Caco-2 (cell line): ENCODE measurements at regions of chr1 and their contacts with region 1.

Region 1: DNA sequence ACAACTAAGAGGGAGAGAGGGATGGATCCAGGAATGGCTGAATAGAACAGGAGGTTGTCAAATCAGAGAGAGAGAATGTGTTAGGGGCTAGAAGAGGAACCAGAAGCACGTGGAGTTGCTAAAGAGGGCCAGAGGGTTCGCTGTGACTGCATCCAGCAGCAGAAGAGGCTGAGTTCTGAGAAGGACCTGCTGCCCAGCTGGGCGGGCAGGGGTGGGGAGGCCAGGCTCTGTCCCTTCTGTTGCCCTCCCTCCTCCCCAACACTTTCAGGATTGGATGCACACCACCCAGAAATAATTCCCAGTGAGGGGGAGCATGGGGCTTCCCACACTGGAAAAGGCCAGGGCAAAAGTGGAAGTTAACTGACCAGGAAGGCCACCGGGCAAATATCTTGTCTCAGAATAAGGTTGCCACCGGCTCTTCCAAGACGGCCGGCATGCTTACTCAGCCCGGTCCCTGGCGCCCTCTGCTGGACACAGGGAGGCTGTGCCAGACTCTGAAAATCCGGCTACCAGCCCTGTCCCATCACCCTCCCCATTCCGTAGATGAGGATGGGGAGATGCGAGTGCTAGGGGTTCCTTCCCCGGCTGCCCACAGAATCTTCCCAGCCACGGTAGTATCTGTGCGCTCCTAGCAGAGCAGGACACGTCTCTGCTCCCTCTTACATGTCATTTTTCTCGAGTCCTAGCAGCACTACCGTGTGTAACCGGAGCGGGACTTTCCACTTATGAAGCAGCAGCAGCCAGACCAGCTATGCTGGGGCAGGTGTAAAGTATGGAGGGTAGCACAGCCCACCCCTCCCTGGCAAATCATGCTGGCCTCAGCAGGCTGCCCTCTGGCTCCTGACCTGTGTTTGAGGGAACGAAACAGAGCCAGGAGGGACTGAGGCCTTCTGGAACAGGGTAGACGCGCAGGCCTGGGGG is 46.8 kb upstream of the A3GALT2 start:
- DNase-seq: peak; percentile 75 to 81
- H3K4me3 ChIP-seq: no peak overlapping the region
- H3K4me3 Mint-ChIP-seq: no peak overlapping the region
- H3K27ac Mint-ChIP-seq: no peak overlapping the region
- H3K4me1 ChIP-seq: peaks cover 18% of the 10 kb centered on the region; the same call in 1 of the 2 replicates
- H3K4me1 Mint-ChIP-seq: peaks cover 8% of the 10 kb centered on the region
- H3K27me3 ChIP-seq: no peaks in the 10 kb centered on the region
- H3K27me3 Mint-ChIP-seq: no peaks in the 10 kb centered on the region
- CTCF ChIP-seq: peak; percentile 67 to 84

Region 2: GRCh38 chr1:33127001-33127791 is 240.5 kb before region 1 on chr1:
- CTCF ChIA-PET with region 1: no interaction called
- POLR2A ChIA-PET with region 1: no interaction called
- intact Hi-C with region 1: loop called (anchors 10 kb)
- DNase-seq: peak; percentile 94 to 97
- H3K4me3 ChIP-seq: peak overlapping the region; percentile 77
- H3K4me3 Mint-ChIP-seq: peak overlapping the region; percentile 80
- H3K27ac Mint-ChIP-seq: peak overlapping the region; percentile 90
- H3K4me1 ChIP-seq: no peaks in the 10 kb centered on the region
- H3K4me1 Mint-ChIP-seq: peaks cover 6% of the 10 kb centered on the region
- H3K27me3 ChIP-seq: no peaks in the 10 kb centered on the region
- H3K27me3 Mint-ChIP-seq: no peaks in the 10 kb centered on the region
- CTCF ChIP-seq: peak; percentile 56 to 80

Region 3: DNA sequence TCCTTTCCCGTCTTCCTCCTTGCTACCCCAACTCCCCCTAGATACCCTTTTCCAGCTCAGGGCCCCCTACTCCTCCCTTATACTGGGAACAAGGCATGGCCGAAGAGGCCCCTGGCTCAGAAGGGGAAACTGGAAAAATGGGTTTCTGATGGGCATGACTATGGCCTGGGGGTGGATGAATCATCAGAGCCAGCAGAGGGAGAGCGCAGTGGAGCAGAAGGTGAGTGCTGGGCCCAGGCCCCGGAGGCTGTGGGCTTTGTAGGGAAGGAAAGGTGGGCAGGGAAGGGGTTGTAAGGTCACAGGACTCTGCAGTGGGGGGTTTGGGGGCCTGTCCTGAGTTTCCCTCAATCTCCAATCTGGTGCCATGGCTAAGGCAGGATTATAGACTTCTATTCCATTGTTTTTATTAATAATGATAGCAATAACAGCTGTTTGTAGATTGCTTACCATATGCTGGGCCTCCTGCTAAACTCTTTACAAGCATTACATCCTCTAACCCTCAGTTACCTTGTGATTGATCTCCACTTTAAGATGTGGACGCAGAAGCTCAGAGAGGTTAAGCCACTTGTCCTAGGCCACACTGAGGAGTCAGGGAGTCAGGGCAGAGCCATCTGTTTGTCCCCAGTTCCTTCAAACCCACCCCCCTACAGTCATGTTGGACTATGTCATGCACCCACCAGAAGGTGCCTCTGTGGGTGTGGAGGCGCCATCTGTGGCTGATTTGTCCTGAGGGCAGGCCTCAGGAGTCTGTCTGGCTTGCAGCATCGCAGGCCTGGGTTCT is 147.7 kb before region 1 on chr1:
- CTCF ChIA-PET with region 1: no interaction called
- POLR2A ChIA-PET with region 1: no interaction called
- intact Hi-C with region 1: loop called (anchors 1 kb)
- DNase-seq: peak; percentile 62 to 77
- H3K4me3 ChIP-seq: no peak overlapping the region
- H3K4me3 Mint-ChIP-seq: peak overlapping the region; percentile 34
- H3K27ac Mint-ChIP-seq: peak overlapping the region; percentile 87
- H3K4me1 ChIP-seq: peaks cover 33% of the 10 kb centered on the region
- H3K4me1 Mint-ChIP-seq: peaks cover 23% of the 10 kb centered on the region
- H3K27me3 ChIP-seq: no peaks in the 10 kb centered on the region
- H3K27me3 Mint-ChIP-seq: no peaks in the 10 kb centered on the region
- CTCF ChIP-seq: no peak

Region 4: DNA sequence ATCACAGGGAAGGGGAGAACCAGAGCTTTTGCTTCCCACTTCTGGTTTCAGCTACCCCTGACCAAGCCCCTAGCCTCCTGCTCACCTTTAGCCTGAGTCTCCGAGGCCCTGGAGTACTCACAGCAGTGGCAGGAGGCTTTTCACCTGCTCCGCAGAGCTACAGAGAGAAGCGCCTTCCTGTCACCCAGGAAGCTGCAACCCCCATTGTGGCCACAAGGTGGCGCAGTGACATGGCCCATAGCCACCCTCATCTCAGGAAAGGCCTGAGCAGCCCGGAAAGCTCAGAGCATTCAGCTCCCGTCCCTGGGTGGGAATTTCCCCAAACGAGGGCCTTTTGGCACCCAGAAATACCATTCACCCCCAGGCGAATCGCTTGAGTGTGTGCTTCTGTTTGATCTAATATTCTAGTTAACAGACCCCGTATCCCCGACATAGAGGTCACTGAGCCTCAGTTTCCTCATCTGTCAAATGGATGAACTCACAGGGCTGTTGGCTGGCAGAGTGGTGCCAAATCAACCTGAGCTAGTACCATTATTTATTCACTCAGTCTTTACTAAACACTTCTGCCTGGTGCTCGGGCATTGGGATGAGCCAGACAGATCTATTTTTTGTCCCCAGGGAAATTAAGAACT is 72.2 kb before region 1 on chr1:
- CTCF ChIA-PET with region 1: interaction called, 11 read pairs
- POLR2A ChIA-PET with region 1: no interaction called
- intact Hi-C with region 1: loop called (anchors 1 kb)
- DNase-seq: peak; percentile 72 to 84
- H3K4me3 ChIP-seq: no peak overlapping the region
- H3K4me3 Mint-ChIP-seq: no peak overlapping the region
- H3K27ac Mint-ChIP-seq: no peak overlapping the region
- H3K4me1 ChIP-seq: no peaks in the 10 kb centered on the region
- H3K4me1 Mint-ChIP-seq: no peaks in the 10 kb centered on the region
- H3K27me3 ChIP-seq: no peaks in the 10 kb centered on the region
- H3K27me3 Mint-ChIP-seq: no peaks in the 10 kb centered on the region
- CTCF ChIP-seq: peak; percentile 78 to 80

Region 5: DNA sequence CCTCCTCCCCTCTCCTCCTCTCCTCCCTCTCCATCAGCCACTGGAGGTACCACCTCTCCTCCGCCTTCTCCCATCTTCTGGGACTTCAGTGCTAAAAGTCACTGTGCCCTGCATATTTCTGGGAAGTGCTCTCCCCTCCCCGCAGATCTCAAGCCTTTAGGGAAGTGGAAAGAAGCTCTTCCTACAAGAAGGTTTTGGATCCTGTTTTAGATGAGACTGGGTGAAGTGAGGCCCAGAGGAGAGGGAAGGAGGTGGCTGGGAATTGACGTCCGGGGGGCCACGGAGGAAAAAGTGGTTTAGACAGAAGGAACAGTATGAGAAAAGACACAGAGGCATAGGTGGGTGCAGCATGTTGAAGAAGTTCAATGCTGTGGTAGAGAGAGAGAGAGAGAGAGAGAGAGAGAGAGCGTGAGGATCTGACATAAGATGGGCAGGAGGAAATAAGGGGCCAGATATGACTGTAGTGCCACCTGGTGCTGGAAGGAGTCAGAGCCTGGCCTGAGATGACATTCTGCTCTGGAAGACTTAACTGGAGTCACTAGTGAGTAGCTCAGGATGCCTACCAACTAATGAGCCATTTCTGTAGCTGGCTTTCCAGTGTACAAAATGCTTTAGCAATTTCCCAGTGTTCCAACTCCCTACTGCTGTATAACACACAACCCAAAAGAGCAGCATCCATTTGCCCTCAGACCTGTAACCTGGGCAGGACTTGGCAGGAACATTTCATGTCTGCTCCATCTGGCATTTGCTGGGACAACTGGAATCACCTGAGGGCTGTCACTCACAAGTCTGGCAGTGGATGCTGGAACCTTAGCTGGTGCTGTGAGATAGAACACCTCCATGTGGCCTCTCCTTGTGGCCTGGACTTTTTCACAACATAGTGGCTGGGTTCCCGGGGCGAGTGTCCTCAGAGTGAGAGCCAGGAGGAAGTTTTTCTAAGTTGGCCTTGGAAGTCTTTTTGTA is 88.1 kb after region 1 on chr1:
- CTCF ChIA-PET with region 1: no interaction called
- POLR2A ChIA-PET with region 1: no interaction called
- intact Hi-C with region 1: loop called (anchors 5 kb)
- DNase-seq: peak; percentile 45 to 54
- H3K4me3 ChIP-seq: no peak overlapping the region
- H3K4me3 Mint-ChIP-seq: no peak overlapping the region
- H3K27ac Mint-ChIP-seq: no peak overlapping the region
- H3K4me1 ChIP-seq: no peaks in the 10 kb centered on the region
- H3K4me1 Mint-ChIP-seq: peaks cover 6% of the 10 kb centered on the region
- H3K27me3 ChIP-seq: no peaks in the 10 kb centered on the region
- H3K27me3 Mint-ChIP-seq: peaks cover 3% of the 10 kb centered on the region
- CTCF ChIP-seq: peak in 1 of 2 experiments; percentile 58

Region 6: GRCh38 chr1:33472349-33472980 is 104.7 kb after region 1 on chr1 and contains the start of gene ZSCAN20:
- CTCF ChIA-PET with region 1: no interaction called
- POLR2A ChIA-PET with region 1: no interaction called
- intact Hi-C with region 1: loop called (anchors 5 kb)
- DNase-seq: peak; percentile 93 to 95
- H3K4me3 ChIP-seq: peak within 1 kb of the TSS; percentile 48
- H3K4me3 Mint-ChIP-seq: peak within 1 kb of the TSS; percentile 81
- H3K27ac Mint-ChIP-seq: peak within 1 kb of the TSS; percentile 67
- H3K4me1 ChIP-seq: 0 out of 2 replicates have a peak, but pooled peaks cover 4% of the 10 kb centered on the region
- H3K4me1 Mint-ChIP-seq: peaks cover 13% of the 10 kb centered on the region
- H3K27me3 ChIP-seq: no peaks in the 10 kb centered on the region
- H3K27me3 Mint-ChIP-seq: no peaks in the 10 kb centered on the region
- CTCF ChIP-seq: no peak
- total RNA-seq, gene ZSCAN20: 2.7 and 3.0 TPM in 2 replicates

Region 7: DNA sequence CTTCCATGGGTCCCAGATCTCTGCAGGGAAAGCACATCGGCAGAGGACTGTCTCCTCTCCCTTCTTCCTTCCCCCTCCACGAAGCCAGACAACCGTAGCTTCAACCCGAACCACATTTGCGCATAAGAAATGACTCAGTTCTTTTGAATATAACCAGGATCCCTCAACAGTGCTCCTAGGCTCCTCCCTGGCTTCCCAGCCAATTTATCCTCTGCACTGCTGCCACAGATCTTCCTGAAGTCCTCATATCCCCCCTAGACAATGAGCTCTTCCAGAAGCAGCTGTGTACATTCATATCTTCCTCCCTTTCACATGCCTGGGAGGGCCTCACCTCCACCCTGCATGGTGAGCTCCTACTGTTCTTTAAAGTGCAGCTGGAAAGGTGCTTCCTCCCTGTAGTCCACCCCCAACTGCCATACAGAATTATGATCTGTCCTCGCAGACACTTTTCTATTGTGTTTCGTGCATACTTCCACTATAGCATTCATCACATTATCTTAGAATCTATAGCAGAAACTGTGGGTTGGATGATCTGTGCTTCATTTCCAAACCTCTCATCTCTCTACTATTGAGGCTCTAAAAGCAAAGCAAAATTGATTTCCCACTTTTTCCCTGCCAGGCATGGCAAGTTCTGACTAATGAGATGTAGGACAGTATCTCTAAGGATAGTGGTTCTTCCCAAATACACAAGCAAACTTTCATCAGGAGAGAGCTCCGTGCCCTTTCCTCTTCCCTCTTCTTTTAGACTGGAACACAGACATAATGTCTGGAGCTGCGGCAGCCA is 316.8 kb after region 1 on chr1:
- CTCF ChIA-PET with region 1: no interaction called
- POLR2A ChIA-PET with region 1: no interaction called
- intact Hi-C with region 1: no loop called
- DNase-seq: no peak
- H3K4me3 ChIP-seq: no peak overlapping the region
- H3K4me3 Mint-ChIP-seq: no peak overlapping the region
- H3K27ac Mint-ChIP-seq: no peak overlapping the region
- H3K4me1 ChIP-seq: no peaks in the 10 kb centered on the region
- H3K4me1 Mint-ChIP-seq: no peaks in the 10 kb centered on the region
- H3K27me3 ChIP-seq: no peaks in the 10 kb centered on the region
- H3K27me3 Mint-ChIP-seq: peaks cover 18% of the 10 kb centered on the region
- CTCF ChIP-seq: no peak

Region 8: GRCh38 chr1:34346128-34346527 is 978.4 kb after region 1 on chr1:
- CTCF ChIA-PET with region 1: interaction called, 11 read pairs
- POLR2A ChIA-PET with region 1: no interaction called
- intact Hi-C with region 1: no loop called
- DNase-seq: no peak
- H3K4me3 ChIP-seq: no peak overlapping the region
- H3K4me3 Mint-ChIP-seq: no peak overlapping the region
- H3K27ac Mint-ChIP-seq: no peak overlapping the region
- H3K4me1 ChIP-seq: no peaks in the 10 kb centered on the region
- H3K4me1 Mint-ChIP-seq: no peaks in the 10 kb centered on the region
- H3K27me3 ChIP-seq: no peaks in the 10 kb centered on the region; the same call in 1 of the 2 replicates
- H3K27me3 Mint-ChIP-seq: peaks cover 10% of the 10 kb centered on the region
- CTCF ChIP-seq: no peak